ENCODE measurements at regions of chr11 and their contacts with region 1.

Region 1: DNA sequence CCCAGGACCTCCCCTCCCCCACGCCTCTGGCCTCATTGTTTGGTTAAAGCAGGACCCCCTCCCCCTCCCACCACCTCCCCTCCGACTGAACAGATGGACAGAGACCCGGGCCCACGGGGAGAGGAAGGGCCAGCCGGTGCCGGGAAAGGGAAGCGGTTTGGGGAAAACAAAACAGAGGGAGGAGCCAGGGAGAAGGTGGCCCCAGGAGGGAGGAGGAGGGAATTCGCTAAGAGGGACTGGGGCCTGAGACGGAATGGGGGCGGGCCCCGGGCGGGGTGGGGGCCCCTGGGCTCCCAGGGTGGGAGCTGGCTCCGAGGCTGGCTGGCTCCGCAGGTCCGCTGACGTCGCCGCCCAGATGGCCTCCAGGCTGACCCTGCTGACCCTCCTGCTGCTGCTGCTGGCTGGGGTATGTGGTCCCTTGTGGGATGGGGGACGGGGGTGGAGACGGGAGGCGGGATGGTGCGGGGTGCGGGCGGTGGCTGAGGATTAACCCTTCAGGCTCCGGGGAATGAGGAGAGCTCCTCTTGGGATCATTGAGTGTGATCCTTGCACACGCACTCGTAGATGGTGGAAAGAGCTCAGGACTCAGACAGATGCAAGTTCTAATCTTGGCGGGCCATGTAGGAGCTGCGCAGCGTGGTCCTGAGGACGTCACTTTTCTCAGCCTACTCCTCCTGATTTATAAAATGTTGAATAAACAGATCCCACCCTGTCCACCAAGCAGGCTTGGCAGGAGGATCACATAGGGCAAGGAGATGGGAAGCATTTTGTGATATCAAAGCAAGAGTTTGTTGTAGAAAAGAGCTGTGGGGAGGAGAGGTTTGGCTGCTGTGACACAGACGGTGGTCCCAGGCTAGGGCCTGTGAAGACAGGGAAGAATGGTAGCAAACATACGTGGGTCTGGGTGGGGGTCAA is 688 bp downstream of the SERPING1 start:
- DNase-seq: peak; percentile 15
- ATAC-seq: peak; percentile 68
- H3K4me3 ChIP-seq: peak overlapping the region; percentile 57 to 68 (median 58); a peak in 5 of 6 replicates
- H3K27ac ChIP-seq: no peak overlapping the region
- H3K4me1 ChIP-seq: peaks cover 38% of the 10 kb centered on the region
- H3K27me3 ChIP-seq: peaks cover 0 to 9% of the 10 kb centered on the region in 2 experiments; a peak in 2 of 5 replicates
- CTCF ChIP-seq: no peak
- EP300 ChIP-seq: no peak
- POLR2A ChIP-seq: no peak
- RAD21 ChIP-seq: no peak

Region 2: DNA sequence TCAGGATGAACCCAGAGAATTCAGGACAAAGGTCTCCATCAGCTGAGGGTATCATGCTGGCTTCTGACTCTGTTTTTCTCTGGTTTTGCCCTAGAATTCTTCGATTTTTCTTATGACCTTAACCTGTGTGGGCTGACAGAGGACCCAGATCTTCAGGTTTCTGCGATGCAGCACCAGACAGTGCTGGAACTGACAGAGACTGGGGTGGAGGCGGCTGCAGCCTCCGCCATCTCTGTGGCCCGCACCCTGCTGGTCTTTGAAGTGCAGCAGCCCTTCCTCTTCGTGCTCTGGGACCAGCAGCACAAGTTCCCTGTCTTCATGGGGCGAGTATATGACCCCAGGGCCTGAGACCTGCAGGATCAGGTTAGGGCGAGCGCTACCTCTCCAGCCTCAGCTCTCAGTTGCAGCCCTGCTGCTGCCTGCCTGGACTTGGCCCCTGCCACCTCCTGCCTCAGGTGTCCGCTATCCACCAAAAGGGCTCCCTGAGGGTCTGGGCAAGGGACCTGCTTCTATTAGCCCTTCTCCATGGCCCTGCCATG is 16.1 kb after region 1 on chr11:
- CTCF ChIA-PET with region 1: no interaction called
- POLR2A ChIA-PET with region 1: interaction called, 10 read pairs
- in situ Hi-C with region 1: no loop called
- intact Hi-C with region 1: no loop called
- DNase-seq: no peak
- ATAC-seq: no peak
- H3K4me3 ChIP-seq: no peak overlapping the region
- H3K27ac ChIP-seq: no peak overlapping the region
- H3K4me1 ChIP-seq: no peaks in the 10 kb centered on the region
- H3K27me3 ChIP-seq: no peaks in the 10 kb centered on the region
- CTCF ChIP-seq: no peak
- EP300 ChIP-seq: no peak
- POLR2A ChIP-seq: no peak
- RAD21 ChIP-seq: no peak

Region 3: DNA sequence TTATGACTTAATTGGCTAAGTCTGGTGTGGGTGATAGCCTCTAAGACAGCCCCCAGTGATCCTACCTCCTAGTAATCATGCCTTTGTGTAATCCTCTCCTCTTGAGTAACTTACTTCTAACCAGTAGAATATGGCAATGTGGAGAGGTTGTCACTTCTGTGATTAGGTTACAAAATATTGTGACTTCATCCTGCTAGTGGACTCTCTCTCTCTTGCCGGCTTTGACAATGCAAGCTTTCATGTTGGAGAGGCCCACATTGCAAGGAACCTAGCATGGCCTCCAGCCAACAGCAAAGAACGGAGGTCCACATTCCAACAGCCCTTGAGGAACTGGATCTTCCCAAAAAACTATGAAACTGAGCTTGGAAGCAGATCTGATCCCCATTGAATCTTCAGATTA is 32.0 kb after region 1 on chr11:
- CTCF ChIA-PET with region 1: no interaction called
- POLR2A ChIA-PET with region 1: no interaction called
- in situ Hi-C with region 1: no loop called
- intact Hi-C with region 1: loop called (anchors 5 kb)
- DNase-seq: no peak
- ATAC-seq: no peak
- H3K4me3 ChIP-seq: no peak overlapping the region
- H3K27ac ChIP-seq: no peak overlapping the region
- H3K4me1 ChIP-seq: peaks cover 23% of the 10 kb centered on the region
- H3K27me3 ChIP-seq: no peaks in the 10 kb centered on the region; a peak in 1 of 5 replicates
- CTCF ChIP-seq: no peak
- EP300 ChIP-seq: no peak
- POLR2A ChIP-seq: no peak
- RAD21 ChIP-seq: no peak

Region 4: DNA sequence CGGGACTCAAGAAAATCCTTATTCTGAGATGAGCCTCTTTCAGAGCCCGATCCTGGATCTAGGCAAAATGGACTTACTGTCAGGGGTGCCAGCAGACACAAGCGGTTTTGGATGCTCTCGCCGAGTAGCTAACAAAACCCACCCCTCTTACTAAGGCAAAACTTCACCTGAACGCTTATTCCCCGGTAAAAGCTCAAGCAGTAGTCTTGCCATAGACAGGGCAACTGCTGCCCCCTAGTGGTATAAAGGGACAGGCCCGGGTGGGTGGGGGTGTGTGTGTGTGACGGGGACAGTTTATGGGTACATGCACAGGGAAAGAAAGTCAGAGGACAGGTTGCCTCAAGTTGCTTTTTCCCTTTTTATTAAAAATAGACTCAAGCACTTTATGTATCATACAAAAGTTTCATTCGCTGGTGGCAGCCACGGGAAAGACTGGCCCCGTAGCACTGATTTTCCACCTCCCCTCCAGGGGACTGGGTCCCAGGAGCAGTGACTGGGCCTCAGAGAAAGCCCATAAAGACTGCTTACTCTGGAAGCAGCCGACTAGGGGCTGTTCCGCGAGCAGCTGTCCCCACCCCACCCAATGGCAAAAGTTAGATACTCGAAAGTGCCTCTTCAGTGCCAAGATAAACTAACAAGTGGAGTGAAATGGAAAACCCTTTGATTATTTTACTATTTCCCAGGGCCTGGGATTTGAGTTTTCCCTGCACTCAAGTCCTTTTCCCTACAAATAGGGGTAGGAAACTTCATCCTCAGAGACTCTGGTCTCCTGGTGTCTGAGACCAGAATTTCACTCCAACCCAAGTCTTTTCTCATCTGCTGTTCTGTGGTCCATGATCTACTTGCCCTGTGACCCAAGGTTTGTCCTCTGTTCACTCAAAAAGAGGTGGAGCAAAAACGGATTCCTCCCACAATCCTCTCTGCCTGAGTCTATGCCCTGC is 46.8 kb after region 1 on chr11:
- CTCF ChIA-PET with region 1: no interaction called
- POLR2A ChIA-PET with region 1: interaction called, 33 read pairs
- in situ Hi-C with region 1: no loop called
- intact Hi-C with region 1: no loop called
- DNase-seq: peak; percentile 69
- ATAC-seq: peak; percentile 81
- H3K4me3 ChIP-seq: no peak overlapping the region
- H3K27ac ChIP-seq: no peak overlapping the region
- H3K4me1 ChIP-seq: peaks cover 37% of the 10 kb centered on the region
- H3K27me3 ChIP-seq: peaks cover 6 to 42% of the 10 kb centered on the region in 2 experiments
- CTCF ChIP-seq: peak; percentile 86
- EP300 ChIP-seq: no peak
- POLR2A ChIP-seq: no peak
- RAD21 ChIP-seq: peak; percentile 52

Region 5: GRCh38 chr11:57712256-57713150 is 114.3 kb after region 1 on chr11 and contains the start of gene TMX2:
- CTCF ChIA-PET with region 1: no interaction called
- POLR2A ChIA-PET with region 1: no interaction called
- in situ Hi-C with region 1: no loop called
- intact Hi-C with region 1: no loop called
- DNase-seq: peak; percentile 100
- ATAC-seq: peak; percentile 95
- H3K4me3 ChIP-seq: peak within 1 kb of the TSS; percentile 92 to 98 (median 92)
- H3K27ac ChIP-seq: peak within 1 kb of the TSS; percentile 82
- H3K4me1 ChIP-seq: peaks cover 29% of the 10 kb centered on the region
- H3K27me3 ChIP-seq: no peaks in the 10 kb centered on the region; a peak in 1 of 5 replicates
- CTCF ChIP-seq: no peak
- EP300 ChIP-seq: no peak
- POLR2A ChIP-seq: peak; percentile 69 to 85
- RAD21 ChIP-seq: no peak
- total RNA-seq, gene TMX2: 67.0 and 129 TPM in 2 replicates